ENCODE measurements at regions of chr14 and their contacts with region 1.

Region 1: GRCh38 chr14:24135834-24136542 is at the start of gene PSME1:
- DNase-seq: peak; percentile 81 to 86
- ATAC-seq: peak; percentile 82 to 92
- H3K4me3 ChIP-seq: peak within 1 kb of the TSS; percentile 88
- H3K27ac ChIP-seq: peak within 1 kb of the TSS; percentile 96 to 98
- H3K4me1 ChIP-seq: peaks cover 32% of the 10 kb centered on the region
- CTCF ChIP-seq: no peak
- EP300 ChIP-seq: no peak
- POLR2A ChIP-seq: peak; percentile 41
- RAD21 ChIP-seq: no peak
- polyA plus RNA-seq, gene PSME1: 77.3 and 83.6 TPM in 2 replicates

Region 2: GRCh38 chr14:23865502-23865901 is 270.5 kb before region 1 on chr14:
- CTCF ChIA-PET with region 1: no interaction called
- POLR2A ChIA-PET with region 1: no interaction called
- DNase-seq: no peak
- ATAC-seq: no peak
- H3K4me3 ChIP-seq: no peak overlapping the region
- H3K27ac ChIP-seq: no peak overlapping the region
- H3K4me1 ChIP-seq: no peaks in the 10 kb centered on the region
- CTCF ChIP-seq: no peak
- EP300 ChIP-seq: no peak
- POLR2A ChIP-seq: no peak
- RAD21 ChIP-seq: no peak

Region 3: GRCh38 chr14:24146978-24147760 is 11.2 kb after region 1 on chr14 and contains the start of gene RNF31:
- CTCF ChIA-PET with region 1: interaction called, 11 read pairs
- POLR2A ChIA-PET with region 1: interaction called, 13 read pairs
- DNase-seq: peak; percentile 94 to 98
- ATAC-seq: peak; percentile 89 to 94
- H3K4me3 ChIP-seq: peak within 1 kb of the TSS; percentile 89
- H3K27ac ChIP-seq: peak within 1 kb of the TSS; percentile 91 to 98
- H3K4me1 ChIP-seq: peaks cover 16% of the 10 kb centered on the region
- CTCF ChIP-seq: no peak
- EP300 ChIP-seq: no peak
- POLR2A ChIP-seq: peak; percentile 42; the same call in 1 of the 2 replicates
- RAD21 ChIP-seq: no peak
- polyA plus RNA-seq, gene RNF31: 5.7 and 19.1 TPM in 2 replicates